Sigmoid colon (tissue), 7 donors: ENCODE measurements at regions of chr18 and their contacts with region 1.

Region 1: GRCh38 chr18:13268158-13269012 is 49.8 kb downstream of the LDLRAD4 start:
- DNase-seq: peak; percentile 76
- H3K4me3 ChIP-seq: no peak overlapping the region
- H3K27ac ChIP-seq: peak overlapping the region; percentile 72 to 86 (median 81)
- H3K4me1 ChIP-seq: peaks cover 0 to 92% (median 76%) of the 10 kb centered on the region in 4 donors
- H3K27me3 ChIP-seq: no peaks in the 10 kb centered on the region
- CTCF ChIP-seq: no peak
- EP300 ChIP-seq: no peak
- POLR2A ChIP-seq: no peak

Region 2: DNA sequence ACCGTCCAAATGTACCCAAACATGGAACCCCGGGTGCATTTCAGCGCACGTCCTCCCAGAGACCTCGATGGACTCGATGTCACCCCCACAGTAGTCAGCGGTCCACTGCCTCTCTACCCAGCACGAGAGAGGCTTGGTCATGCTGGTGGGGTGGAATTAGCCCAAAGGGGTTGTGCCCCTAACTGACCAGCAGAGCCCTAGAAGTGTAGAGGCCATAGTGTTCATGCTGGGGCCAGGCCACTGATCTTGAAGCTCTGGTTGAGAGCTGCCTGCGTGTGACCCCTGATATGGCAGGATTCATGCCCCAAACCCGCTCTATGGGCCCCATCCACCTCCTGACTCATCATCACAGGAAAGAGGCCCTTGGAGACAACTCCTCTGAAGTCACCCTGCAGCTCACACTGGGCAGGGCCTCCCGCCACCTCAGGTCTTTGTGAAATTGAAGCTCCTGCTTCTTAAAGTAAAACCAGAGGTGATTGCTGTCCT is 972.4 kb before region 1 on chr18:
- intact Hi-C with region 1: no loop called
- DNase-seq: peak; percentile 53
- H3K4me3 ChIP-seq: no peak overlapping the region
- H3K27ac ChIP-seq: no peak overlapping the region
- H3K4me1 ChIP-seq: no peaks in the 10 kb centered on the region
- H3K27me3 ChIP-seq: no peaks in the 10 kb centered on the region
- CTCF ChIP-seq: no peak
- EP300 ChIP-seq: no peak
- POLR2A ChIP-seq: no peak

Region 3: DNA sequence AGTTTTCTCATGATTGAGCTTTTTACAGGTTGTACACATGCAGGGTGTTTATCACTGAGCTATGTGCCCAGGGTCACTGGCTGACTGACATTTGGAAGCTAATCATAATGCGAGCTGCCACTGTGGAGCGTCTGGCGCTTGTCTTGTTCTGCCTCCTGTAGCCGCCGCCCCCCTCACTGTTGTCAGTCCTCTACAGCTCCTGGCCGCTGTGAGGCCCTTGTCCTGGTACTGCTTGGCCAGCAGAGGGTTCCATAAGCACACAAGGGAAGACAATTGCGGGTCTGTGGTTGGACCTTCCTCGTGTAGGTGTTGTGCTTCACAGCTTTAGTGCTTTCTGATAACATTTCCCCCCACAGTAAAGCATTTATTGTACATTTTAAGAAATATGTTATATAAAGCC is 155.4 kb before region 1 on chr18:
- intact Hi-C with region 1: no loop called
- DNase-seq: peak; percentile 81
- H3K4me3 ChIP-seq: no peak overlapping the region
- H3K27ac ChIP-seq: peak overlapping the region in 2 of 4 donors; percentile 35 to 43
- H3K4me1 ChIP-seq: peaks cover 0 to 9% (median 2%) of the 10 kb centered on the region in 4 donors
- H3K27me3 ChIP-seq: no peaks in the 10 kb centered on the region
- CTCF ChIP-seq: peak; percentile 42 to 71 (median 56)
- EP300 ChIP-seq: no peak
- POLR2A ChIP-seq: no peak

Region 4: DNA sequence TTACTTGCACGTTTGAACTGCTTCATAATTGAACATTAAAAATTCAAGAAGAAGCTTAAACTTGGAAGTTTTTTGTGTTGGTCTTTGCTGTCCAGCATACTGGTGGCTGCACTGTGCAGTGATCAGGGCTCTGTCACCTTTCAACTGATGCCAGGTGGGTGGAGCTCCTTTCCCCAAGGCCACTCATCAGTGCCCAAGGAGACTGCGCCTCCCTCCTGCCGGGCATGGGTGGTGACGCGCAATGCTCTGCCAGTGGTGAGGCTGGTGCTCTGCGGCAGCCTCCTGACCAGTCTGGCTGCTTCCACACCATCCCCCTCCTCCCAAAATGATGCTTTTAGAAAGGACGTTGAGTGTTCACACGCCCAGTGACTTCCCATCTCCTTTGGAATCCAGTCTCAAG is 65.8 kb before region 1 on chr18:
- intact Hi-C with region 1: no loop called
- DNase-seq: no peak
- H3K4me3 ChIP-seq: no peak overlapping the region
- H3K27ac ChIP-seq: no peak overlapping the region
- H3K4me1 ChIP-seq: no peaks in the 10 kb centered on the region
- H3K27me3 ChIP-seq: no peaks in the 10 kb centered on the region
- CTCF ChIP-seq: no peak
- EP300 ChIP-seq: no peak
- POLR2A ChIP-seq: no peak

Region 5: GRCh38 chr18:13318731-13319501 is 50.5 kb after region 1 on chr18:
- intact Hi-C with region 1: loop called (anchors 5 kb)
- DNase-seq: peak; percentile 53
- H3K4me3 ChIP-seq: no peak overlapping the region
- H3K27ac ChIP-seq: peak overlapping the region; percentile 54 to 78 (median 64)
- H3K4me1 ChIP-seq: peaks cover 0 to 27% (median 17%) of the 10 kb centered on the region in 4 donors
- H3K27me3 ChIP-seq: no peaks in the 10 kb centered on the region
- CTCF ChIP-seq: no peak
- EP300 ChIP-seq: no peak
- POLR2A ChIP-seq: no peak

Region 6: GRCh38 chr18:13481820-13482617 is 213.6 kb after region 1 on chr18:
- intact Hi-C with region 1: no loop called
- DNase-seq: peak; percentile 61
- H3K4me3 ChIP-seq: no peak overlapping the region
- H3K27ac ChIP-seq: no peak overlapping the region
- H3K4me1 ChIP-seq: peaks cover 0 to 24% (median 7%) of the 10 kb centered on the region in 4 donors
- H3K27me3 ChIP-seq: no peaks in the 10 kb centered on the region
- CTCF ChIP-seq: no peak
- EP300 ChIP-seq: no peak
- POLR2A ChIP-seq: no peak

Region 7: DNA sequence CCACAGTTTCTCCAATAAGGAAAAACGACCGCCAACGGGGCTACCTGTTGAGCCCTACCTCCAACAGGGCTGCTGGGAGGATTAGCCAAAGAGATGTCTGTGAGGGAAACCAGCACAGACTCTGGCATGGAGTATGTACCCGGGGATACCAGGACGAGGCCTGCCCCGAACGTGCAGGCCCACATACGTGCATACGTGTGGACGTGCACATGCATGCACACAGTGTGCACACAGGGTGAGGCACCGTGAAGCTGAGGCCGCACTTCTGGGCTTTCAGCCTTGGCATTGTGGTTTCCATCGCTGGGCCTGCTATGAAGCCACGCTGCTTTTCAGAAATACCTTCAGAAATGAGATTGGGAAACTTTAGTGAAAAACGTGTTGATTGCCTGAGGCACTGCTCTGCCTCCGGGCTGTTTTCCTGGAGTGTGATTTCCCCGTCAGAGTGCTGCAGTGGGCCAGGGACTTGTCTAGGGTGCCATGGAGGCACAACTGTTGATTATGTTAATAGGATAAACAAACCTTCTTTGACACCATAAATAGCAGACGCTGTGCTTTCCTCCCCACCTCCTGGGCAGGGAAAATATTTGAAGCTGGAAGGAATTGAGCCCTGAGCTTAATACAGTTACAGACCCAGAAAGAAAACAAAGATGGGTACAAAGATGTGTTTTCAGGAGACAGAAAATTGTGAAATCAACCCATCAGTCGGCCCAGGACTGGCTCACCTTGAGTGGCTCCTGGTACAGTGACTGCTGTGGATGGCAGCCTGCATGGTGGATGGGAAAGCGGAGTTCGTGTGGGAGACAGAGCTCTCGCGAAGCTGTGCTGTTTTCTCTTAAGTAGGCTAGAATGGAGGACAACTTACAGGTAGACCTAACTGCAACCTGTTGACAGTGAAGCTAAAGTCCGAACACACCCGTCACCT is 275.7 kb after region 1 on chr18:
- intact Hi-C with region 1: loop called (anchors 2 kb)
- DNase-seq: no peak
- H3K4me3 ChIP-seq: no peak overlapping the region
- H3K27ac ChIP-seq: peak overlapping the region; percentile 66 to 83 (median 73)
- H3K4me1 ChIP-seq: peaks cover 0 to 100% (median 91%) of the 10 kb centered on the region in 4 donors
- H3K27me3 ChIP-seq: no peaks in the 10 kb centered on the region
- CTCF ChIP-seq: no peak
- EP300 ChIP-seq: peak in 1 of 4 donors; percentile 36
- POLR2A ChIP-seq: no peak